HEK293 (cell line): ENCODE measurements at regions of chr3 and their contacts with region 1.

Region 1: DNA sequence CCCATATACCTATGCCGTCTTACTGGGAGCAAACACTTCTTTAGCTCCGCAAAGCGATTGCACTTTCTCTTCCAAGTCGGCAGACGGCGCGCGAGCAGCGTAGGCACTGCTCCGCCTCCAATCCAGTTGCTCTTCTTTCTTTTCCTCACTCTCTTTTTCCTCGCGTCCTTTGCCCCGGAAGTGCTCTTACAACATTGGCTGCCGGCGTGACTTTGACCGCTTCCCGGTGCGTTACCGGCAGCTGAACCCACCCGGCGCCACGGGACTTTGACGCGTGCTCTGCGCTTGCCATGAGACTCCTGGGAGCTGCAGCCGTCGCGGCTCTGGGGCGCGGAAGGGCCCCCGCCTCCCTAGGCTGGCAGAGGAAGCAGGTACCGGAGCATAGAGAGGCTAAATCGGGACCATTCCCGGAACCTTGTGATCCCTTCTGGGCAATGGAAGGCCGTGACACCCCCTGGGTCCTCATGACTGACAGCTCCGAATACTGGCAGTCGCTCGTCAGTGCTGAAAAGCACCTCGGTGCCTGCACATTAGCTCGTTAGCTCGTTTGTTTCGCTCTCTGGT is at the start of gene GFM1:
- H3K4me3 ChIP-seq: peak within 1 kb of the TSS; percentile 99
- H3K27ac ChIP-seq: peak within 1 kb of the TSS; percentile 57
- H3K4me1 ChIP-seq: no peaks in the 10 kb centered on the region
- CTCF ChIP-seq: peak; percentile 91

Region 2: DNA sequence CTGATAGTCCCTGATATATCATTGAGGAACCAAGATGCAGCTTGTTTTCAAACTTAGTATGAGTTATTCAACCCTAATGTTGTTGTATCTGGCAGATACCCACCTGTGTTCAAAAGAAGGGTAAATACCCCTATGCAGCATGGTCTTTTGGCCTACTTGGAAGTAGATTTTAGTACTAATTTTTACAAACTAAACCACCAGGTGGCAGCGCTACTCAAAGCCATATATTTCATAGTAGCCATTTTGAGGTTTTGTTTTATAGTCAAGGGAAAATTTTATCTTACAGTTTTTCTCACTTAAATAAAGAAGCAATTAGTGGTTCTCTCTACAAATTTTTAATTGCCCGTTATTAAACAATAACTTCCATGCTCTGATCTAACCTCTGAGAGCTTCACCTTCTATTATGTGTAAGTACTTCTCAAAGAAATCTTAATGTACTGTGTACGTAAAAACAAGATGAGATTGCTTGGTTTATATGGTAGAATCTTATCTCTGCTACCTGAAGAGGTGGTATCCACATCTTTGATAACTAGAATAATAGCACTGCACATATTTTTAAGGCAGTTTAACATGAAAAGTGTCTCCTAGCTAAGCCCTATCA is 104.9 kb before region 1 on chr3:
- CTCF ChIA-PET with region 1: interaction called, 22 read pairs
- POLR2A ChIA-PET with region 1: no interaction called
- H3K4me3 ChIP-seq: no peak overlapping the region
- H3K27ac ChIP-seq: no peak overlapping the region
- H3K4me1 ChIP-seq: no peaks in the 10 kb centered on the region
- CTCF ChIP-seq: no peak

Region 3: GRCh38 chr3:158570999-158571974 is 73.1 kb before region 1 on chr3 and contains the start of gene MLF1:
- CTCF ChIA-PET with region 1: interaction called, 5 read pairs
- POLR2A ChIA-PET with region 1: interaction called, 17 read pairs
- H3K4me3 ChIP-seq: peak within 1 kb of the TSS; percentile 42
- H3K27ac ChIP-seq: peak within 1 kb of the TSS; percentile 21; the same call in 1 of the 2 replicates
- H3K4me1 ChIP-seq: no peaks in the 10 kb centered on the region
- CTCF ChIP-seq: no peak

Region 4: GRCh38 chr3:158659454-158660237 is 15.2 kb after region 1 on chr3:
- CTCF ChIA-PET with region 1: interaction called, 18 read pairs
- POLR2A ChIA-PET with region 1: interaction called, 5 read pairs
- H3K4me3 ChIP-seq: no peak overlapping the region
- H3K27ac ChIP-seq: no peak overlapping the region
- H3K4me1 ChIP-seq: no peaks in the 10 kb centered on the region
- CTCF ChIP-seq: no peak